MCF 10A (cell line): ENCODE measurements at regions of chr2 and their contacts with region 1.

Region 1: GRCh38 chr2:233976690-233977294 is 59.6 kb downstream of the TRPM8 start:
- DNase-seq: peak; percentile 75
- H3K4me3 Mint-ChIP-seq: no peak overlapping the region
- H3K27ac Mint-ChIP-seq: no peak overlapping the region
- H3K4me1 Mint-ChIP-seq: peaks cover 29% of the 10 kb centered on the region
- H3K27me3 Mint-ChIP-seq: no peaks in the 10 kb centered on the region
- CTCF ChIP-seq: peak; percentile 68

Region 2: DNA sequence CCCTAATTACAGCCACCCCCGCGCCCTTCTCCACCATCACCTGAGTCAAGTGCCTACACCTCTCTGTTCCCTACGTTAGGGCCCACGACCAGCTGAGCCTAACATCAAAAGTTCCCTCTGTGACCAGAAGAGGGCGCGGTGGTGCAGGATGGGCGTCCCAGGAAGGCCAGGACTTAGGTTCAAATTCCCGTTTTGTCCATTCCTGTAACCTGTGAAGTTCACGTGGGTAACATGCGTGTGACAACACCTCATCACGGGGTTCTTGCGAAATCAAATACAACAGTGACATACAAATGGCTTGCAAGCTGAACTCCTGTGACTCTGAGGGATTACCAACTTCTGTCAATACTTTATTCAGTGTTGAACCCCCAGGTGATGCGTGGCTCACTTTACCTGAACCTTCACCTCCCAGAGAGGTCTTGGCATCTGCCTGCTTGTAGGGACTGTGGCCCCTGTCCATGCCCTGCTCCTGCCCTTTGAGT is 312.2 kb after region 1 on chr2:
- CTCF ChIA-PET with region 1: no interaction called
- POLR2A ChIA-PET with region 1: no interaction called
- intact Hi-C with region 1: loop called (anchors 2 kb)
- DNase-seq: peak; percentile 77
- H3K4me3 Mint-ChIP-seq: no peak overlapping the region
- H3K27ac Mint-ChIP-seq: no peak overlapping the region
- H3K4me1 Mint-ChIP-seq: peaks cover 18% of the 10 kb centered on the region
- H3K27me3 Mint-ChIP-seq: no peaks in the 10 kb centered on the region
- CTCF ChIP-seq: peak; percentile 77

Region 3: DNA sequence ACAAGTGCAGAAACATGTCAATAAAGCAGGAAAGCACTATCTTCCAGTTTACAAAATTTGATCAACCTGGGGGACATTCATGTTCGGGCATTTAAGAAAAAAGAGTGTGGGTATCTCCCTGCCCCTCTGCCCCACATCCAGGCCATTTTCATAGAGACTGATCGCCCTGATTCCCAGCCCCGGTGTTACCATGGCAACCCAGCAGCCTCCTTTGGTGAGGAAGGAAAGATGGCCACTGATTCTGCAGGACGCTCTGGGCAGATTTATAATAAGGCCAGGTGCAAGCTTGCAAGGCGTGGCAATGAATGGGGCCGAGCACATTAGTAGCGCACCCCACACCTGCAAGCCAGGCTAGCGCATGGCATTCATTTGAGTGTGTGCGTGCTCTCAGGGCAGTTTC is 556.8 kb after region 1 on chr2:
- CTCF ChIA-PET with region 1: interaction called, 11 read pairs
- POLR2A ChIA-PET with region 1: no interaction called
- intact Hi-C with region 1: no loop called
- DNase-seq: no peak
- H3K4me3 Mint-ChIP-seq: no peak overlapping the region
- H3K27ac Mint-ChIP-seq: no peak overlapping the region
- H3K4me1 Mint-ChIP-seq: no peaks in the 10 kb centered on the region
- H3K27me3 Mint-ChIP-seq: no peaks in the 10 kb centered on the region
- CTCF ChIP-seq: no peak

Region 4: GRCh38 chr2:234544659-234545611 is 568.1 kb after region 1 on chr2:
- CTCF ChIA-PET with region 1: interaction called, 32 read pairs
- POLR2A ChIA-PET with region 1: no interaction called
- intact Hi-C with region 1: loop called (anchors 1 kb)
- DNase-seq: peak; percentile 68
- H3K4me3 Mint-ChIP-seq: no peak overlapping the region
- H3K27ac Mint-ChIP-seq: no peak overlapping the region
- H3K4me1 Mint-ChIP-seq: no peaks in the 10 kb centered on the region
- H3K27me3 Mint-ChIP-seq: no peaks in the 10 kb centered on the region
- CTCF ChIP-seq: peak; percentile 87